CD14-positive monocyte (primary cell): ENCODE measurements at regions of chr2 and their contacts with region 1.

Region 1: DNA sequence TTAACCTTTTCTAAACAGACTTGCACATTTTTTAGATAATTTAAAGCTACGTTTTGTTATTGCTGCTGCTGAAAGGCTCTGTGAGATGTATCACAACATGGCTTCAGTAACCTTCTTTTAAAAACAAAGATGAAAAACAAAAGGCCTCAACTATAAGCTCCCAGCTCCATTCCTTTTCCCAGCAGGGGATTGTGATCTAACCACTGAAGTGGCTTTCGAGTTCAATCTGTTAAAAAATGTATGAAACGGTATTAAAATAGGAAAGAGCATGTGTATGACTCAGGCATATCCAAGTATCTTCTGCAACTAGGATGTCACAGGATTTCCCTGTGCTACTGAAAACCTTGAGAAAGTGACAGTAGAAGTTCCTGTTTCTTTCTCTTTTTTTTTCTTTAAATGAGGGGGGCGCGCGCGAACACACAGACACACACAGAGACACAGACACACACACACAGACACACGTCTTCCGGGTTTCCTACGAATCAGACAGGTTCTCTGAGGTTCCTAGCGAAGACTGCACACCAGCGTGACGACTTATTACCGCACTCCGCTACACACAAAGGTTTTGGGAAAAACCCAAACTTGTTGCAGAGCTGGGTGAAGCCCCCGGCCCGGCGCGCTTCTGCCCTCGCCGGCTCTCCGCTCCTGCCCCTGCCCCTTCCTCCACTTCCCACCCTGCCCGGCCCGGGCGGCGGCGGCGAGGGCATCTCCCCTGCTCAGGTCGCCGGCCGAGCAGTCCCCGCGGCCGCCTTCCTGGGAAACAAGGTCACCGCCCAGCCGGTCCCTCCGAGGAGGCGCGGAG is 86.8 kb downstream of the RBMS1 start:
- DNase-seq: peak; percentile 87 to 96 (median 90)
- H3K4me3 ChIP-seq: peak overlapping the region; percentile 71 to 87 (median 77)
- H3K4me3 Mint-ChIP-seq: peak overlapping the region; percentile 87 to 97
- H3K27ac ChIP-seq: peak overlapping the region; percentile 92 to 96
- H3K27ac Mint-ChIP-seq: peak overlapping the region; percentile 95 to 99 (median 98)
- H3K4me1 ChIP-seq: peaks cover 48 to 69% of the 10 kb centered on the region in 2 donors
- H3K4me1 Mint-ChIP-seq: peaks cover 72% of the 10 kb centered on the region
- H3K27me3 ChIP-seq: no peaks in the 10 kb centered on the region
- H3K27me3 Mint-ChIP-seq: no peaks in the 10 kb centered on the region
- CTCF ChIP-seq: no peak

Region 2: GRCh38 chr2:160338901-160339685 is 67.7 kb before region 1 on chr2:
- intact Hi-C with region 1: loop called (anchors 5 to 10 kb)
- DNase-seq: no peak
- H3K4me3 ChIP-seq: no peak overlapping the region
- H3K4me3 Mint-ChIP-seq: no peak overlapping the region
- H3K27ac ChIP-seq: peak overlapping the region in 1 of 2 donors; percentile 2
- H3K27ac Mint-ChIP-seq: peak overlapping the region in 3 of 7 donors; percentile 34 to 75 (median 65)
- H3K4me1 ChIP-seq: peaks cover 0 to under 1% of the 10 kb centered on the region in 2 donors
- H3K4me1 Mint-ChIP-seq: peaks cover 13% of the 10 kb centered on the region
- H3K27me3 ChIP-seq: no peaks in the 10 kb centered on the region
- H3K27me3 Mint-ChIP-seq: no peaks in the 10 kb centered on the region
- CTCF ChIP-seq: no peak

Region 3: DNA sequence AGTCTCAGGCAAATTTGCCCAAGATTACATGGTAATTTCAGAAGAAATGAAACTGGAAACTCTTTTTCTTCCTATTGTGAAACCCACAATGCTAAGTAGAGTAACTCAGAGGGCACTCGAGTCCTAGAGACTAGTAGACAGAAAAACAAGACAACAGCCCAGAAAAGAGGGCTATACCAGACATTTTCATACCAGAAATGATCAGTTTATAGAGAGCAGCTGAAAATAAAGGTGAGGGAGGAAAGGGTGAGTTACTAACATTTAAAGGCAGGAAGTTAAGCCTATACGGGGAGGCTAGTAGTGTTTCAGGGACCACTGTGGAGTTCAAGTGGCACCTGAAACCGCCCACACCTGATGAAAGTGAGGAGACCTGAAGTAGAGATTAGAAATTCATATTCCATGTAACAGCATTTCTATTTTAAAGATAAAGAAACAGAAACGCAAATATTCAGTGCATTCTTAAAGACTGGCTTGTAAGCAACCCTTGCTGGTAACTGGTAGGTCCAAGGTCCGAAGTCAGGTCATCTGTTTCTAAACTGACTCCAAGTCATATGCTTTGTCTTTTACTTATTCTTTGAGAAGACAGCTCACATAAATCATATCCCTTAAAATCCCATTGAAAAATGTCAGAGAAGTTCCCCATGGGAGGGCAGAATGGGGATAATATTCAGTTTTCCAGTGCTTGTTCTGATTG is 61.6 kb before region 1 on chr2:
- intact Hi-C with region 1: loop called (anchors 5 to 10 kb)
- DNase-seq: peak in 2 of 3 donors; percentile 37 to 52
- H3K4me3 ChIP-seq: peak overlapping the region in 1 of 3 experiments; percentile 36
- H3K4me3 Mint-ChIP-seq: peak overlapping the region; percentile 17 to 82
- H3K27ac ChIP-seq: peak overlapping the region in 1 of 2 donors; percentile 72
- H3K27ac Mint-ChIP-seq: peak overlapping the region; percentile 74 to 94 (median 85)
- H3K4me1 ChIP-seq: peaks cover 28 to 33% of the 10 kb centered on the region in 2 donors
- H3K4me1 Mint-ChIP-seq: peaks cover 45% of the 10 kb centered on the region
- H3K27me3 ChIP-seq: no peaks in the 10 kb centered on the region
- H3K27me3 Mint-ChIP-seq: no peaks in the 10 kb centered on the region
- CTCF ChIP-seq: no peak

Region 4: DNA sequence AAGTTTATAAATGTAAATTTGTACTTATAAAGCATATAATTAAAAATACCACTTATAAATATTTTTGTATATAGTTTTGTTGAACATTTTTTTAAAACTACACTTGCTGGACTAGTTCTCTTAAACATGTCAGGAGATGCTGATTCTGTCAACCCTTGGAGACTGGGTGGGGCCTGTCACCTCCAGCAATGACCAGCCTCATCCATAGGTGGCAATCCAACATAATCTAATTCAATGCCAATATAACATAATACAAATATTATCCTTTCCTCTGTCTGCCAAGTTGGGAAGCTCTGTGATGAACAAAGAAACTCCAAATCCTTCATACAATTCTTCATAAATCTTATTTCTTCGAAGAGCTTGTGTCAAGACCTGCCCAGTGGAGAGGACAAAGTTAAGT is 53.6 kb before region 1 on chr2:
- intact Hi-C with region 1: loop called (anchors 5 to 10 kb)
- DNase-seq: peak in 1 of 3 donors; percentile 25
- H3K4me3 ChIP-seq: no peak overlapping the region
- H3K4me3 Mint-ChIP-seq: no peak overlapping the region
- H3K27ac ChIP-seq: peak overlapping the region in 1 of 2 donors; percentile 9
- H3K27ac Mint-ChIP-seq: peak overlapping the region in 2 of 7 donors; percentile 48 to 77
- H3K4me1 ChIP-seq: peaks cover 30 to 39% of the 10 kb centered on the region in 2 donors
- H3K4me1 Mint-ChIP-seq: peaks cover 45% of the 10 kb centered on the region
- H3K27me3 ChIP-seq: no peaks in the 10 kb centered on the region
- H3K27me3 Mint-ChIP-seq: no peaks in the 10 kb centered on the region
- CTCF ChIP-seq: peak; percentile 25

Region 5: DNA sequence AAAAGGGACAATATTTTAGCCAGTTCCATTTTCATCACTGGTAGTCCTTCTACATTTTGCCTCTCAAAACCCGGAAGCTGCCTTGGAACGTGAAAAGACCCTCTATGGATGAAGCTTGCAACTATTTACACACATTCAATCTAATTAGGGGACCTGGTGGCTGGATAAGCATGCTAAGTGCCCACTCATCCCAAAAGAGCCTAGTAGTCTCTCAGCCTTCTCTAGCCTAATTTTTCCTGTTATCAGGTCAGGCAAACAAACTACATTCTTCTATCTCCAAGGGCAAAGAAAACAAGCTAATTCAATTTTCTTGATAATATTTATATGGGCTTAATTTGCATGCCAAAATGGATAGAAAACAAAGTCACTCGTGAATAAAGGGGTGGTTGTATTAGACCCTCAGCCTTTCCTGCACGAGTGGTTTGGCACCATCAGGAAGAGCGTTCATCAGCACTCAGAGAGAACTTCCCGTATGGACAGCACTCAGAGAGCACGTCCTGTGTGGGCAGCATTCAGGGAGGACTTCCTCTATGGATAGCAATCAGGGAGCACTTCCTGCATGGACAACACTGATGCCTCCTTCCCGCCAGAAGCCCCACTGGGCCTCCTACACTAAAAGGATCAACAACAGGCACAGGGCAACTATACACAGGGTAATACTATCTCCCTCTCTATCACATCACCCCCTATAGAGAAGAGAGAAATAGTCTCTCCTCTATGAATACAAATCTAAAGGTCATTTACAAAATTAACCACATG is 35.4 kb before region 1 on chr2:
- intact Hi-C with region 1: loop called in 1 of 2 experiments (anchors 5 kb)
- DNase-seq: peak in 2 of 3 donors; percentile 70 to 72
- H3K4me3 ChIP-seq: peak overlapping the region in 1 of 3 experiments; percentile 44
- H3K4me3 Mint-ChIP-seq: peak overlapping the region in 1 of 2 donors; percentile 39
- H3K27ac ChIP-seq: peak overlapping the region; percentile 36 to 79
- H3K27ac Mint-ChIP-seq: peak overlapping the region; percentile 55 to 93 (median 90)
- H3K4me1 ChIP-seq: peaks cover 70 to 88% of the 10 kb centered on the region in 2 donors
- H3K4me1 Mint-ChIP-seq: peaks cover 79% of the 10 kb centered on the region
- H3K27me3 ChIP-seq: no peaks in the 10 kb centered on the region
- H3K27me3 Mint-ChIP-seq: no peaks in the 10 kb centered on the region
- CTCF ChIP-seq: no peak

Region 6: DNA sequence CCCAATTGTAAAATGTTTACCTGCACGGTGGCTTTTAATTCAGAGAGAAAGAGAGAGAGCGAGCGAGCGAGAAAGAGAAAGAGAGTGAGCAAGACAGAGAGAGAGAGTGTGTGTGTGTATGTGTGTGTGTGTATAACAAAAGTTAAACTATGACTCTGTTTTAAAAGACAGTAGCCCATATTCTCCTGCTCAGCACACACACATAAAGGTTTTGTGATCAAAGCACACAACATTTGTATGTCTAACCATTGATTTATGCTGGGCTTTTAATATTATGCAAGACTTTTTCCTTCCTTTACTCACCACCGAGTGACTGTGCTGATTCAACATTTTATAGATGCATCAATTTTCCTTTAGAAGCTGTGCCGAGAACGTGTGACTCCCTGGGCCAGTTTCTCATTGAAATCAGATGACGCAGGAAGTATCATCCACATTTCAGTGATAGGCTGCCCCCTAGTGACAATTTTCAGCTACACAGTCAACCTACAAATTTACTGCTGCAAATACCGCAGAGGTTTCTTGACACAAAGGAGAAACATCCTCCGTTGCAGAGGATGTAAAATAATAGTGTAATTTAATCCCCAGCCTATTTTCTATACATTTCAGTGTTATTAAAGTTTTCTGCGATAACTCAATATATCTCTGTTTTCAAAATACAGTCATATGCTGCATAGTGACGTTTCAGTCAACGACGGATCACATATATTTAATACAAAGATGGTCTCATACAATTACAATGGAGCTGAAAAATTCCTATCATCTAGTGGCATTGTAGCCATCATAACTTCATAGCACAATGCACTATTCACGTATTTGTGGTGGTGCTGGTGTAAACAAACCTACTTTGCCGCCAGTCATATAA is 587.6 kb after region 1 on chr2:
- intact Hi-C with region 1: loop called in 1 of 2 experiments (anchors 10 kb)
- DNase-seq: peak; percentile 66 to 80 (median 74)
- H3K4me3 ChIP-seq: no peak overlapping the region
- H3K4me3 Mint-ChIP-seq: peak overlapping the region in 1 of 2 donors; percentile 71
- H3K27ac ChIP-seq: no peak overlapping the region
- H3K27ac Mint-ChIP-seq: peak overlapping the region in 1 of 7 donors; percentile 83
- H3K4me1 ChIP-seq: peaks cover 0 to 8% of the 10 kb centered on the region in 2 donors
- H3K4me1 Mint-ChIP-seq: peaks cover 4% of the 10 kb centered on the region
- H3K27me3 ChIP-seq: no peaks in the 10 kb centered on the region
- H3K27me3 Mint-ChIP-seq: peaks cover 0 to 3% (median 0%) of the 10 kb centered on the region in 3 donors
- CTCF ChIP-seq: peak; percentile 82

Region 7: DNA sequence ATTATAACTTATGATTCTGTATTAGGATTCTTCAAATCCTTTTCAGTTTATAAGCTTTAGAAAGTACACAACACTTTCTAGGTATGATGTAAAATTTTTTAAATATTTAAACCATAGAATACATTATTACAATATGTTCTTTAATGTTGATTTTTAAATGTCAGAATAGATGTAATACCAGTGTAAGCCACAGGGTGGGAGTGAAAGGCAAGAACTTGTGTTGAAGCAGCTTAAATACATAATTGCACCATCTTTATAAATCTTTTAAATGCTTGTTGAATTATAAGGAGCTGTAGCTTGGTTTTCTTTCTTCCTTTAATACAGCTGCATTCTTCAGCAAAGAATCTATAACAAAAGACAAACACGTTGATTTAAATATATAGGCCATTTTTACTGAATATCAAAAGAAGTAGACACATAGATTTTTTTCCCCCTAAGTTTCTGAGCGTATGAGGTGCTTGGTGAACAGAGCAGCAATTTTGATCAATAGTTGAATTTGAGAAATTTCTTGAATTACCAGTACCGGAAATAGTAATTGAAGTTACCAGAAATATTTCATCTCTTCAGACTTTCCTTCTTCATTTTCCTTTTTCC is 816.4 kb after region 1 on chr2:
- intact Hi-C with region 1: no loop called
- DNase-seq: peak in 2 of 3 donors; percentile 33 to 52
- H3K4me3 ChIP-seq: no peak overlapping the region
- H3K4me3 Mint-ChIP-seq: no peak overlapping the region
- H3K27ac ChIP-seq: no peak overlapping the region
- H3K27ac Mint-ChIP-seq: no peak overlapping the region
- H3K4me1 ChIP-seq: no peaks in the 10 kb centered on the region
- H3K4me1 Mint-ChIP-seq: no peaks in the 10 kb centered on the region
- H3K27me3 ChIP-seq: no peaks in the 10 kb centered on the region
- H3K27me3 Mint-ChIP-seq: no peaks in the 10 kb centered on the region
- CTCF ChIP-seq: peak; percentile 83